ENCODE measurements at regions of chr5 and their contacts with region 1.

Region 1: DNA sequence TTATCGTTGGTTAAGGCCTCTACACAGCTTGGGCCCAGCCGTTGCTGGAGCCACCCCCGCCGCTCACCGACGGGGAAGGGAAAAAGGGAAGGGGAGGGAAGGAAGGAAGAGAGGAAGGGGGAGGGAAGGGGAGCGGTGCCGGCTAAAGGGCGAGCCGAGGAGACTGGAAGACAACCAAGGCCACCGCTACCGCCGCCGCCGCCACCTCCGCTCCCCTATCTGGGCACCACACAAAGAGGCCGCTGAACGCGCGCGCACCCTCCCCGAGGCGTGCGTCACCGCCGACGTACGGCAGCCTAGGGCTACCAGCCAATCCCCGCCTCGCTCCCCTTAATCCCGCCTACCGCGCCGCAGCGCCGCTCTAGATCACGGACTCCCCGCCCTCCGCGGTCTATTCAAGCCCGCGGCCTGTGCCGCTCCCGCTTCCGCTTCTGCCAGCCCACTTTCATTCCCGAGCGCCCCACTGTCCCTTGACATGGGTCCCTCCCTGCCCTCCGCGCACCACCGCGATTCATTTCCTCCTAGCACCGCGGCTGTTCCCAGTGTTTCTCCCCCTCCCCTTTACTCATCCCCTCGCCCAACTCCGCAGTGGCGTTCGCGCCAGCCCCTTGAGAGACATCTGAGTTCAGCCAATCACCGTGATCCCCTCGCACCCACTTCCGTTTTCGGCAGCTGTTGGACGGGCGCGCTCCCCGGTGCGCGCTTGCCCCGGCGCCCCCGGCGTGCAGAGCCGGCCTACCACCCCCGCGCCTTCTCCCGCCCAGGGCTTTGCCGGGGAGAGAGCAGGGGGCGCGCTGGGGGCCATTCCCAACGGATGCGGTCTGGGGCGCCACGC is at the start of gene HNRNPA0:
- DNase-seq: peak; percentile 95 to 100 (median 97)

Region 2: DNA sequence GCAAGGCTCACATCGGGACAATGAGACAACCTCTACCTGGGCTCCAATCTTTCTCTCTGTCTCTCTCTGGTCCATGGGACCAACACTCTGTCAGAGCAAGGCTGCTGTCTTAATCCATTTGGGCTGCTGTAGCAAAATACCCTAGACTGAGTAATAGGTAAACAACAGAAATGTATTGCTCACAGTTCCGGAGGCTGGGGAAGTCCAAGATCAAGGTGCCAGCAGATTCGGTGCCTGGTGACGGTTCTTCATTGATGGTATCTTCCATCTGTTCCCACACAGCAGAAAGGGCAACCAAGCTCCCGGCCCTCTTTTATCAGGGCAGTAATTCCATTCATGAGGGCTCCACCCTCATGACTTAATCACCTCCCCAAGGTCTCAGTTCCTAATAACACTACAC is 193.9 kb before region 1 on chr5:
- intact Hi-C with region 1: no loop called
- DNase-seq: no peak

Region 3: DNA sequence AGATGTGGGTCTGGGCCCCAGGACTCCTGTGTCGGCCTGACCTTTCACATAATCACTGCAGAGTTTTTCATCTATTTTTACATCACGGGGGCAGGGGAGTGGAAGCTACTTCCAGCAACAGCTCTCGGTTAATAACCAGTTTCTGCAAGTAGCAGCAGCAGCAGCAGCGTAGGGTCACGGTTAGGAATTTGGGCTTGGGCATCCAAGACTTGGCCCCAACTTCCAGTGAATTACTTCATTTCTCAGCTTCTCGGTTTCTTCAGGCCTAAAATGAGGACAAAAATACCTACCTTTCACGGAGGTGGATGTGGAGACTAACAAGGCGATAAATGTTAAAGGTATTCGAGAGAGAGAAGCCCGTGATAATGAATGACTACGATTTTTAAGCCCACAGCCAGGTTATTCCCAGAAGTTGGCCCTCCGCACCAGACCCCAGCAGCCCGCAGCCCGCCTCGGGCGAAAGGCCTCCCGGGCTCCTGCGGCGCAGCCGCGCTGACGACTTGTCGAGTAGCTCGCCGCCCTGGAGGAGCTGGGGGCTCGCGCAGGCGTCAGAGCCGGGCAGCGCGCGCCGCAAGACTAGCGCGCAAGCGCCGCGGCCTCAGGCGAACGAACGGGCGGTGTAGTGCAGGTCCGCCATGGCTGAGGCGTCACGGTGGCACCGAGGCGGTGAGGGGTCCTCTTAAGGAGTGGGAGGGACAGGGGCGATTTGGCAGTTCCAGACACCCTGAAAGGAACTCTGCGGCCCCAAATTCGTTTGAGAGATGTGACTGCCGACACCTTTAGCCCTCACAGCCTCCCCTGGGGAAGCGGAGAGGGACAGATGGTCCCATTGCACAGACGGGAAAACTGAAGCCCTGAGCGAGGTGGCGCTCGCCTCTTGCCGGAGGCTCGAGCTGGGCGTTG is 134.8 kb after region 1 on chr5 and contains the start of gene PKD2L2:
- intact Hi-C with region 1: loop called (anchors 10 kb)
- DNase-seq: peak; percentile 64 to 98 (median 82)

Region 4: DNA sequence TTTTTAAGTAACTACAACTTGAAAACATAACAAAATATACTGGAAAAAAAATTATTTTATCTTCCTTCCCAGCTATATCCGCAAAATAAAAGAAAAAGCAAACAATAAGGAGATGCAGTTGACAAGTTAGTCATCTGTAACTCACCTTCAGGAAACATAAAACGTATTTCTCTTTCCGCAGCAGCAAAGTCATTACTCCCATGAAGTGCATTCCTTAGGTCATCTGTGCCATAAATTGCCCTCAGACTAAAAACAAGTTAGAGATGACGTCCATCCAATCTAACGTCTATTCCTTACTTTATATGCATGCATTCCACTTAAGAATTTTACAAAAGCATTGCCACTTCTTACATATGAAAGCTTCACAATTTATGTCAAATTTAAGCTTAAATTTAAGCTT is 374.0 kb after region 1 on chr5:
- intact Hi-C with region 1: loop called (anchors 1 kb)
- DNase-seq: no peak

Region 5: GRCh38 chr5:138615461-138615860 is 861.1 kb after region 1 on chr5:
- intact Hi-C with region 1: no loop called
- DNase-seq: peak in 1 of 10 donors; percentile 39

Region 6: DNA sequence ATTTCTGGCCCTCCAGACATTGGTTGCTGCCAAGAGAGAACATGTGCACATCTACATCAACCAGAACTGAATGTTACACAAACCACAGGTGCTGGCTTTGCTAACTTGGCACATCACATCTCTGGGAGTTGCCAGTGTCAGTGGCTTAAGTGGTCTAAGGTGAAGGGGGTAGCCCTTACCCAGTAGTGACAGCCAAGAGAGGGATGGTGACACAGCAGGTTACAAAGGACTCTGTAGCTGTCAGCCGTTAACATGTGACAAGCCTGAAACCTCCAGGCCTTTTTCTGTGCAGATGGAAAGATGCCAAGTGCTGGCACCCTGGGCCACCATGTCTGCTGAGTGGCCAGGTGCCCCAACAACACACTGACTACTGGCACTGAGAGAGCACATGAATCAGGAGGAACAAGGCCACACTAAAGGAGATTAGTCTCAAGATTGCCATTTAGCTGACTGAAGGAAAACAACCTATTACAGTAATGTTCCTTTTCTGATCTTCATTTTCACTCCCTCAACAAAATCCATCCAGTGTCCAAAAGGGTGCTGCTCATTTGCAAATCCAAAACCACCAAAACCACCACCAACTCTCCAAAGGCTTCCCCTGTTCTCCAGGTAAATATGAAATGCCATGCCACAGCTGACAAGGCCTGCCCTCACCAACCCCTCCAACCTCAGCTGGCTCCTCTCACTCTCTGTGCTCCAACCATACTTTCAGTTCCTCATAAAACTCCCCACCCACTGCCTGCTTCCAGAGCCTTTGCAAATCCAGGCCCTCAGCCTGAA is 1423.7 kb after region 1 on chr5:
- intact Hi-C with region 1: no loop called
- DNase-seq: no peak